Activated T-helper 2 cell treated with anti-CD3 and anti-CD28 coated beads, Interferon-gamma antibody, Interleukin-2, Interleukin-4, amounts not matched to agents 10 μg/mL and 5 μg/mL and 100 μg/mL, durations not matched to agents 14 hours and 24 hours and 36 hours (primary cell): ENCODE measurements at regions of chr6 and their contacts with region 1.

Region 1: DNA sequence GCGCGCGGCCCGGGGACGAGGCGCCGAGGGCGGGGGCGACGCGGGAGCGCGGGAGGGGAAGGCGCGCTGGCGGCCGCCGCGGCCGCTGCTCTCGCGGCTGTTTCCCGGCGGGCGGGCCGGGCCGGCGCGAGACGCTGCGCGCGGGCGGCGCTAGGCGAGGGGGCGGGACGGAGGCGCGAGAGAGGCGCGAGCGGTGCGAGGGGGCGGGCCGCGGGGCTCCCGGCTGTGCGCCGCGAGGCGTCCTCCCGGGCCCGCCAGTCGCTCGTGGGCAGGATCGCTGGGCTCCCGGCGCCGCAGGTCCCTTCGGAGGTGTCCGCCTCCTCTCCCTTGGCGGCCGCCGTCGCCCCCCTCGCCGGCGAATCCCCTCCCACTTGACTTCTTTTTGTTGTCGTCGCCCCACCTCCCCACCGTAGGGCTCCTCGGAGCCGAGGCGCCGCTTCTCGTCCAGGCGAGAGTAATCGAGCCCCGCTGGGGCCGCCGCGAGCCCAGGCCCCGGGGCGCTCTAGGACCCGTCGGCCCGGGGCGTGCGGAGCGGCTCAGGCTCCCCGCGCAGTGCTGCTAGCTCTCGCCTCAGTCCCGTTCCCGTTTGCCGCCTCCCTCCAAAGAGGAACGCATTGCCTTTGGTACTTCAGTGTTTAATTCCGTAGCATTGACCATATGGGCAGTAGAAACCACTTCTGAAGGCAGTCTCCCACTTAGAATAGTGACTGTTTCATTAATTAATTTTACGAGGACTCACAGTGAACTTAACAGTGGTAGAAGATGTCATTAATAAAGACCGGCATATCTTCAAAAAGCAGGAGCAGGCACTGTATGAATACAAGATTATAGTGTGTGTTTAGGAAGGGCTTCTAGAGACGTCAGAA is at the start of gene RANBP9:
- DNase-seq: peak; percentile 85
- H3K4me3 Mint-ChIP-seq: peak within 1 kb of the TSS; percentile 93
- H3K27ac Mint-ChIP-seq: peak within 1 kb of the TSS; percentile 93
- H3K4me1 Mint-ChIP-seq: peaks cover 57% of the 10 kb centered on the region
- H3K27me3 Mint-ChIP-seq: no peaks in the 10 kb centered on the region
- total RNA-seq, gene RANBP9: 50.7 and 55.7 TPM in 2 replicates

Region 2: DNA sequence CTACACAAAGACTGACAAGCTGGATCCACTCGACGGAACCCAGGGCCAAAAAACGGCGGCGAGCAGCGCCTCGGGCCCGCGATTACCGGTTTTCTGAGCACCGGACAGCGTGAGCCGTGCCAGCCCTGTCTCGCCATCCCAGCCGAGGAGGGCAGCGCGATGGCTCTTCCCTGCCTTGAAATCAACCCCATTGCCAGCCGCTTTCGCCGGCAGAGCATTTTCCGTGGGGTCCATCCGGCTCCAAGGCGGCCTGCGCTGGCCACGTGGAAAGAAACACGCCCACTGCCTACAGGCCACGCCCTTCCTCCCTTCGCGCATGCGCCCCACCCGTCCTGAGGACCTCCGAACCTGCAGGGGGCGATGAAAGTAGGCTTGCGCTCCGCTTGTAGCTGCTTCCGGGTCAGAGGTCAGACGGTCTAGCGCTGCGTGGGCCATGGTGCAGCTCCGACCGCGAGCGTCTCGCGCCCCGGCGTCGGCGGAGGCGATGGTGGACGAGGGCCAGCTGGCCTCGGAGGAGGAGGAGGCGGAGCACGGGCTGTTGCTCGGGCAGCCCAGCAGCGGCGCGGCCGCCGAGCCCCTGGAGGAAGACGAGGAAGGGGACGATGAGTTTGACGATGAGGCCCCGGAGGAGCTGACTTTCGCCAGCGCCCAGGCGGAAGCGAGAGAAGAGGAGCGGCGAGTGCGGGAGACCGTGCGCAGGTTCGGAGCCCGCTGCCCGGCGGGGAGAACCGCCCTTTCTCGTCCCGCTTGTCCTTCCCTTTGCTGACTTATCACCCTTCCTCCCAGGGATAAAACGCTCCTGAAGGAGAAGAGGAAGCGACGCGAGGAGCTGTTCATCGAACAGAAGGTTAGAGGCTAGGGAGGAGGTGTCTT is 96.8 kb before region 1 on chr6 and contains the start of gene NOL7:
- intact Hi-C with region 1: loop called (anchors 1 kb)
- DNase-seq: peak; percentile 97
- H3K4me3 Mint-ChIP-seq: peak within 1 kb of the TSS; percentile 98
- H3K27ac Mint-ChIP-seq: peak within 1 kb of the TSS; percentile 93
- H3K4me1 Mint-ChIP-seq: peaks cover 31% of the 10 kb centered on the region
- H3K27me3 Mint-ChIP-seq: no peaks in the 10 kb centered on the region
- total RNA-seq, gene NOL7: 82.5 and 84.1 TPM in 2 replicates

Region 3: GRCh38 chr6:13681305-13682061 is 30.5 kb before region 1 on chr6:
- intact Hi-C with region 1: loop called (anchors 2 kb)
- DNase-seq: no peak
- H3K4me3 Mint-ChIP-seq: peak overlapping the region; percentile 61
- H3K27ac Mint-ChIP-seq: peak overlapping the region; percentile 82
- H3K4me1 Mint-ChIP-seq: peaks cover 38% of the 10 kb centered on the region
- H3K27me3 Mint-ChIP-seq: no peaks in the 10 kb centered on the region

Region 4: GRCh38 chr6:13762611-13763441 is 50.9 kb after region 1 on chr6:
- intact Hi-C with region 1: loop called (anchors 2 kb)
- DNase-seq: no peak
- H3K4me3 Mint-ChIP-seq: peak overlapping the region; percentile 72
- H3K27ac Mint-ChIP-seq: peak overlapping the region; percentile 87
- H3K4me1 Mint-ChIP-seq: peaks cover 47% of the 10 kb centered on the region
- H3K27me3 Mint-ChIP-seq: no peaks in the 10 kb centered on the region

Region 5: GRCh38 chr6:13795041-13795750 is 83.2 kb after region 1 on chr6:
- intact Hi-C with region 1: loop called (anchors 2 kb)
- DNase-seq: peak; percentile 76
- H3K4me3 Mint-ChIP-seq: no peak overlapping the region
- H3K27ac Mint-ChIP-seq: peak overlapping the region; percentile 77
- H3K4me1 Mint-ChIP-seq: peaks cover 24% of the 10 kb centered on the region
- H3K27me3 Mint-ChIP-seq: no peaks in the 10 kb centered on the region

Region 6: DNA sequence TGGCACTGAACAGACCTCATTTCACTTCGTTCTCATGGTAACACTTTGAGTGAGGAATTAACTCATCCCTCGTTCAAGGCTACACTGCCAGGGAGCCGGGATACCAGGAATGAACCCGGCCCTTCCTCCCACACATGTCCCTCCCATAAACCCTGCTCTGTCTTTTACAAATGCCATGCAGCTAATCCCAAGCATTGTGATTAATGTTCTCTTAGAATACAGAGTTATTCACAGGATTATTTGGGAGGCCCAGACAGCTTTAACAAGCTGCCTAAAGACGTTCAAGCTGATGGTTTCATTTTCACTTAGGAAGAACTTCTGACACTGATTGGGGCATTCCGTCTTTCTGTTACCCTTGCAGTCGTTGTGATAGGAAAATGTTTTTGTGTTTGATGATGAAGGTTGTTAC is 363.1 kb after region 1 on chr6:
- intact Hi-C with region 1: loop called (anchors 10 kb)
- DNase-seq: no peak
- H3K4me3 Mint-ChIP-seq: peak overlapping the region; percentile 82
- H3K27ac Mint-ChIP-seq: peak overlapping the region; percentile 95
- H3K4me1 Mint-ChIP-seq: peaks cover 58% of the 10 kb centered on the region
- H3K27me3 Mint-ChIP-seq: no peaks in the 10 kb centered on the region